Kidney (tissue), 22 donors: ENCODE measurements at regions of chr19 and their contacts with region 1.

Region 1: GRCh38 chr19:8412783-8413628 is at the start of gene MARCHF2:
- DNase-seq: peak; percentile 98 to 99 (median 98)
- H3K4me3 ChIP-seq: peak within 1 kb of the TSS; percentile 31 to 85 (median 78)
- H3K27ac ChIP-seq: peak within 1 kb of the TSS in 1 of 2 donors; percentile 14
- H3K4me1 ChIP-seq: peaks cover 0 to 6% (median 0%) of the 10 kb centered on the region in 3 donors
- H3K27me3 ChIP-seq: no peaks in the 10 kb centered on the region
- CTCF ChIP-seq: peak; percentile 63
- total RNA-seq, gene MARCHF2: 48.4 TPM

Region 2: GRCh38 chr19:8505680-8506401 is 92.8 kb after region 1 on chr19:
- intact Hi-C with region 1: loop called (anchors 10 kb)
- DNase-seq: peak; percentile 88 to 94 (median 91)
- H3K4me3 ChIP-seq: peak overlapping the region; percentile 3 to 63 (median 11)
- H3K27ac ChIP-seq: no peak overlapping the region
- H3K4me1 ChIP-seq: peaks cover 0 to 3% (median 3%) of the 10 kb centered on the region in 3 donors
- H3K27me3 ChIP-seq: no peaks in the 10 kb centered on the region
- CTCF ChIP-seq: peak; percentile 62